ENCODE measurements at regions of chr11 and their contacts with region 1.

Region 1: DNA sequence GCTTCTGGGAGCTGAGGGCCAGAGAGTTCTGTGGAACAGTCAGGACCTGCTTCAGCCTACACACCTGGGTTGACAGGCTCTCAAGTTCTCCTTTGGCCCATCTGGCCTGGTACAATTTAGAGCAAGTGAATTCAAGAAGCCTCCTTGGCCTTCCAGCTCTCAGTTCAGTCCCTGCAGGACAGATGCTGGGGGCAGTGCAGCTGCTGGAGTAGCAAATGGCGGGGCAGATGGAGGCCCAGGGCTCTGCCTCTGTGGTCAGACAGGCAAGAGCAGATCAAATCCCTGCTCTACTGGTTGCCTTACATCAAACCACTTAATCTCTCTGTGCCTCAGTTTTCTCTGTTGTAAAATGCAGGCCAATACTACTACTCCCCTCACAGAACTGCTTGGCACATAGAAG is 8.7 kb upstream of the KCNK7 start:
- DNase-seq: no peak
- ATAC-seq: no peak
- H3K4me3 Mint-ChIP-seq: no peak overlapping the region
- H3K27ac Mint-ChIP-seq: no peak overlapping the region
- H3K4me1 Mint-ChIP-seq: peaks cover 11% of the 10 kb centered on the region
- H3K27me3 Mint-ChIP-seq: no peaks in the 10 kb centered on the region

Region 2: DNA sequence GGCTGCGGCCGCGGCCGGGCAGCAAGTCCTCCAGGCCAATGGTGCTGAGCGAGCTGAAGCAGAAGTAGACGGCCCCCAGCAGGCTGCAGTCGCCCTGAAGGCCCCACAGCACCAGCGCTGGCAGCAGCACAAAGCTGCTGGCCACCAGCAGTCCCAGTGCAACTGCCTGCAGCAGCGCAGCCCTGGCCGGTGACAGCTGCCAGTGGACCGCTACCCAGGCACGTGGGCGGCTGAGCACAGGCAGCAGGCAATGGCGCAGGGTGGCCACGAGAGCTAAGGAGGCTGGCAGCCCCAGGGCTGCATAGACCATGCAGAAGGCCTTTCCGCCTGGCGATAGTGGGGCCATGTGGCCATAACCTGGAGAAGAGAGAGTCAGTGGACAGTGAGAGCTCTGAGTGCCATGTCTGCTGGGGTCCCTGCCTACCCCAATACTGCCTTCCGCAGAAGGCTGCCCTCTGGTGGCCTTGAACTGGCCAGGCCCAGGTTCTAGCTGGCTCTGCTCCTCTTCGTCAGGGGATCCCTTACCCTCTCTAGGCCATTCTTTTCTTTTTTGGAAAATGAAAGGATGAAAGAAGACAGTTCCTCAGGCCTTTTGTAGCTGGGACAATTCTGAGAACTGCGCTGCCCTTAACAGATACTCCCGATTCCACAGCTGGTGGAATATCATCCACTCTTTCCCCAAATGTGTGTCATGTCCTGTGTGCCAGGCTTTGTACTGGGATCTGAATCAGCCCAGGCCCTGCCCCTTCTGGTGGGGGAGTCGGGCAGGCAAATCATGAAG is 10.6 kb before region 1 on chr11:
- CTCF ChIA-PET with region 1: interaction called, 24 read pairs
- POLR2A ChIA-PET with region 1: interaction called, 5 read pairs
- DNase-seq: peak; percentile 64
- ATAC-seq: peak; percentile 73
- H3K4me3 Mint-ChIP-seq: no peak overlapping the region
- H3K27ac Mint-ChIP-seq: peak overlapping the region; percentile 63
- H3K4me1 Mint-ChIP-seq: peaks cover 18% of the 10 kb centered on the region
- H3K27me3 Mint-ChIP-seq: no peaks in the 10 kb centered on the region